Naive thymus-derived CD4-positive, alpha-beta T cell (primary cell): ENCODE measurements at regions of chr13 and their contacts with region 1.

Region 1: GRCh38 chr13:39616087-39616694 is 13.2 kb upstream of the LHFPL6 start:
- DNase-seq: peak in 7 of 9 donors; percentile 5 to 48 (median 41)
- ATAC-seq: peak; percentile 85
- H3K4me3 ChIP-seq: no peak overlapping the region
- H3K4me3 Mint-ChIP-seq: no peak overlapping the region
- H3K27ac ChIP-seq: no peak overlapping the region
- H3K27ac Mint-ChIP-seq: no peak overlapping the region
- H3K4me1 ChIP-seq: no peaks in the 10 kb centered on the region
- H3K4me1 Mint-ChIP-seq: no peaks in the 10 kb centered on the region
- H3K27me3 ChIP-seq: no peaks in the 10 kb centered on the region
- H3K27me3 Mint-ChIP-seq: peaks cover 3 to 17% (median 10%) of the 10 kb centered on the region in 5 donors

Region 2: DNA sequence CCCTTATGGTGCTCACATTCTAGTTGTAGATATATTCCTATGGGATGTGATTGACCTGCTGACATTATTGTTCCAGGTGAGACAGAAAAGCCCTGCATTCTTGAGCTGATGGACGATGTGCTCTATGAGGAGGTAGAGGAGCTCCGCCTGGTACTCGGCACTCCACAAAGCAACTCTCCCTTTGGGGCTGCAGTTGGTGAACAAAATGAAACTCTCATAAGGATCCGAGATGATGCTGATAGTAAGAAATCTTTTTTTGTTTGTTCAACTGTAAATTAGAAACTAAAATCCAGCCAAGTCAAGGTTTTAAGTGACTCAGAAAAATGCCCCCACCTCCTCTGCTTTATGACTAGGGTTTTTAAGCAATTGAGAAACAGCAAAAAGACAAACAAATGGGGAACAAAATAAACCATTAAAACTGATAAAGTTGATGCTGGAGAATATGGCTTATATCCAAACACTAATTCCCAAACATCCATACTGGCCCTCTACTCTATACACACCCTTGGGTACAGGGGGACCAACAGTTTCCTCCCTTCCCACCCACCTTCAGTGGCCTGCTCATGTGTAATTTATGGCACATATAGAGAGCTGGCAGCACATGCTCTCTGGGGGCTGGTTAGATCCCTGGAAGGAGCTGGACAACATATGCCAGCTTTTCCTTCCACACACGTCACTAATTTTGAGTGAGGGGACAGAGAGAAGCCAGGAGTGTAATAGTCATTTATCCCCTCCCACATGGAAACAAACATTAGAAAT is 765.1 kb before region 1 on chr13:
- CTCF ChIA-PET with region 1: no interaction called
- POLR2A ChIA-PET with region 1: no interaction called
- intact Hi-C with region 1: no loop called
- DNase-seq: no peak
- ATAC-seq: no peak
- H3K4me3 ChIP-seq: no peak overlapping the region
- H3K4me3 Mint-ChIP-seq: no peak overlapping the region
- H3K27ac ChIP-seq: no peak overlapping the region
- H3K27ac Mint-ChIP-seq: no peak overlapping the region
- H3K4me1 ChIP-seq: no peaks in the 10 kb centered on the region
- H3K4me1 Mint-ChIP-seq: no peaks in the 10 kb centered on the region
- H3K27me3 ChIP-seq: no peaks in the 10 kb centered on the region
- H3K27me3 Mint-ChIP-seq: peaks cover 0 to 15% (median 12%) of the 10 kb centered on the region in 5 donors

Region 3: DNA sequence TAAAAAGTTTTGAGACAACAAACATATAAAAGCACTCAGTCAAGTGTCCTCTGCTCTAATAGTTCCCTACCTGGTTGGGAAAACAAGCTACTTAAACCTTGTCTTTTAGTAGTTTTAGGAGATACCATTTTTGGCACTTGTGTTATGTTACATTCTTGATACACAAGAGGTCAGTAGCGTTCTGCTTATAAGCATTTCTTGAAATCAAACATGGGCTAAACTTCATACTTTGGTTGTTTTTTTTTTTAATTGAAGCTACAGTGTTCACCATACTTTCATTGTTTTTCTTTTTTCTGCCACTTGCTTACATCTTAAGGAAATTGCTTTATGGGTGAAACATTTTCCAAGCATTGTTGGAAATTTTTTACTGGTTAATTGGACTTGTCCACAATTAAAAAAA is 565.0 kb before region 1 on chr13:
- CTCF ChIA-PET with region 1: interaction called, 7 read pairs
- POLR2A ChIA-PET with region 1: no interaction called
- intact Hi-C with region 1: loop called (anchors 1 kb)
- DNase-seq: peak in 5 of 9 donors; percentile 11 to 38 (median 22)
- ATAC-seq: peak; percentile 51
- H3K4me3 ChIP-seq: no peak overlapping the region
- H3K4me3 Mint-ChIP-seq: no peak overlapping the region
- H3K27ac ChIP-seq: no peak overlapping the region
- H3K27ac Mint-ChIP-seq: peak overlapping the region in 1 of 9 donors; percentile 20
- H3K4me1 ChIP-seq: no peaks in the 10 kb centered on the region
- H3K4me1 Mint-ChIP-seq: peaks cover 0 to 13% (median 7%) of the 10 kb centered on the region in 7 donors
- H3K27me3 ChIP-seq: no peaks in the 10 kb centered on the region
- H3K27me3 Mint-ChIP-seq: no peaks in the 10 kb centered on the region

Region 4: DNA sequence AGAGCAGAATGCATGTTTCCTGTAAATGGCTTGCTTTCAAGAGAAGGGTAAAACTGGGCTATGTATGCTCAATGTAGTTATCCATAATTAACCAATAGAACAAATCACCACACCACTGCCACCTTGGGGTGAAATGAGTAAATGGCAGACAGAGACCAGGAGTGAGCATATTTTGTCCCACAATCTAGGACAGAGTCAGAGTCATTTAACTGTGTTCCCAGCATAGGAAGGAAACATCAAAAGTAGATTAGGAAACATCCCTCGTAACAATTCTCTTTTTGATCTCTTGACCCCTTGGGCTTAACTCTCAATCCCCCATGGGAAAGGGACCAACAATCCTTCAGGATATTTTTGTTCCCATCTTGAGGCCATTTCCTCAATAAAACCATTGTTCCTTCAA is 353.2 kb before region 1 on chr13:
- CTCF ChIA-PET with region 1: no interaction called
- POLR2A ChIA-PET with region 1: no interaction called
- intact Hi-C with region 1: loop called in 1 of 2 experiments (anchors 5 kb)
- DNase-seq: peak in 3 of 9 donors; percentile 1 to 36 (median 11)
- ATAC-seq: peak; percentile 38
- H3K4me3 ChIP-seq: no peak overlapping the region
- H3K4me3 Mint-ChIP-seq: no peak overlapping the region
- H3K27ac ChIP-seq: no peak overlapping the region
- H3K27ac Mint-ChIP-seq: no peak overlapping the region
- H3K4me1 ChIP-seq: no peaks in the 10 kb centered on the region
- H3K4me1 Mint-ChIP-seq: peaks cover 0 to 15% (median 0%) of the 10 kb centered on the region in 7 donors
- H3K27me3 ChIP-seq: no peaks in the 10 kb centered on the region
- H3K27me3 Mint-ChIP-seq: peaks cover 0 to 17% (median 4%) of the 10 kb centered on the region in 5 donors

Region 5: GRCh38 chr13:39415008-39415802 is 201.0 kb before region 1 on chr13:
- CTCF ChIA-PET with region 1: no interaction called
- POLR2A ChIA-PET with region 1: no interaction called
- intact Hi-C with region 1: loop called in 1 of 2 experiments (anchors 2 kb)
- DNase-seq: peak in 1 of 9 donors; percentile 2
- ATAC-seq: no peak
- H3K4me3 ChIP-seq: no peak overlapping the region
- H3K4me3 Mint-ChIP-seq: no peak overlapping the region
- H3K27ac ChIP-seq: no peak overlapping the region
- H3K27ac Mint-ChIP-seq: no peak overlapping the region
- H3K4me1 ChIP-seq: no peaks in the 10 kb centered on the region
- H3K4me1 Mint-ChIP-seq: no peaks in the 10 kb centered on the region
- H3K27me3 ChIP-seq: no peaks in the 10 kb centered on the region
- H3K27me3 Mint-ChIP-seq: peaks cover 15 to 42% (median 35%) of the 10 kb centered on the region in 5 donors

Region 6: DNA sequence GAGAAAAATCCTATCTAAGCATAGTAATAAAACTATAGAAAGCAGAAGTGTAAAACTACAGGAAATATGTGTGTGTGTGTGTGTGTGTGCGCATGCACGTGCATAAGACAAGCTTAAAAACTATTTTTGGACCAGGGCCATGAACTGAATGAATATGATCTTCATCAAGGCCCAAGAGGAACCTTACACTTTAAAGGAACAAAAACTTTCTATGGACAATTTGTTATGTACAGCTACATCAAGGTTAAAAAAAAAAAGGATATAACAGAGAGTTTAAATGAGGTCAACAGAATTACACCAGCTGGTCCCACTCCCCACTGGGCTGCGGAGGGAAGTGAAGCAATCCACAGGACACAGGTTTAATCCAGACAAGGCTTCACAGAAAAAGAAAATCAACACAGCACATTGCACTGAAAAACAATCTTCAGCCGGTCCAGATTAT is 164.3 kb before region 1 on chr13:
- CTCF ChIA-PET with region 1: no interaction called
- POLR2A ChIA-PET with region 1: no interaction called
- intact Hi-C with region 1: no loop called
- DNase-seq: no peak
- ATAC-seq: peak; percentile 79
- H3K4me3 ChIP-seq: no peak overlapping the region
- H3K4me3 Mint-ChIP-seq: no peak overlapping the region
- H3K27ac ChIP-seq: no peak overlapping the region
- H3K27ac Mint-ChIP-seq: no peak overlapping the region
- H3K4me1 ChIP-seq: no peaks in the 10 kb centered on the region
- H3K4me1 Mint-ChIP-seq: peaks cover 0 to 7% (median 0%) of the 10 kb centered on the region in 7 donors
- H3K27me3 ChIP-seq: peaks cover 0 to 4% of the 10 kb centered on the region in 2 donors
- H3K27me3 Mint-ChIP-seq: peaks cover 21 to 50% (median 32%) of the 10 kb centered on the region in 5 donors